ENCODE measurements at regions of chr19 and their contacts with region 1.

Region 1: GRCh38 chr19:16125737-16126495 is 14.2 kb downstream of the RAB8A start:
- DNase-seq: no peak

Region 2: GRCh38 chr19:14556662-14557188 is 1569.2 kb before region 1 on chr19:
- intact Hi-C with region 1: loop called in 1 of 2 experiments (anchors 10 kb)
- DNase-seq: peak; percentile 93

Region 3: GRCh38 chr19:16226878-16227836 is 101.2 kb after region 1 on chr19:
- intact Hi-C with region 1: no loop called
- DNase-seq: no peak